GM12878 (cell line): ENCODE measurements at regions of chr4 and their contacts with region 1.

Region 1: DNA sequence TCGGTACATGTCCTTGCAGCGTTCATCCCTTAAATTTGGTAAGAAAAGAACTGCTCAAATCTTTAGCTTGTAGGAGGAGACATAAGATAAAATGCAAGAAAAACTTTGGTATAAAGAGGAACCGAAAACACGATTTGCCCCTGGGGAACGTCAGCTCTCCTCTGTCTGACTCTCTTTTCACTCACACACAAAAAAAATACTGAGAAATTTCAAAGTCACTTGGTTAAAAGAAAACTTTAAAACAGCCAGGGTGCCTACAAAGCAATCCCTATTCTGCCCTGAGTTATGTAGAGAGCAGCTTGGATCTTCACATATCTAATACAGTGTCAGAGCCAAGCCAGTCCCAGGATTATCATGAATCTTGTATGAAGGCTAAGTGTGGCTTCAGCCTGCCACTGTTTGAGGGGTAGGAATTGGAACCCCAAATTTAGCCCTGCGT is 248.5 kb upstream of the CXXC4 start:
- DNase-seq: peak; percentile 89
- ATAC-seq: peak; percentile 94
- H3K4me3 ChIP-seq: peak overlapping the region; percentile 30; the same call in 1 of the 2 replicates
- H3K27ac ChIP-seq: peak overlapping the region; percentile 95
- H3K4me1 ChIP-seq: peaks cover 12% of the 10 kb centered on the region
- H3K27me3 ChIP-seq: no peaks in the 10 kb centered on the region
- CTCF ChIP-seq: no peak
- EP300 ChIP-seq: peak; percentile 46 to 93; a peak in 3 of 4 replicates
- POLR2A ChIP-seq: no peak
- RAD21 ChIP-seq: no peak

Region 2: DNA sequence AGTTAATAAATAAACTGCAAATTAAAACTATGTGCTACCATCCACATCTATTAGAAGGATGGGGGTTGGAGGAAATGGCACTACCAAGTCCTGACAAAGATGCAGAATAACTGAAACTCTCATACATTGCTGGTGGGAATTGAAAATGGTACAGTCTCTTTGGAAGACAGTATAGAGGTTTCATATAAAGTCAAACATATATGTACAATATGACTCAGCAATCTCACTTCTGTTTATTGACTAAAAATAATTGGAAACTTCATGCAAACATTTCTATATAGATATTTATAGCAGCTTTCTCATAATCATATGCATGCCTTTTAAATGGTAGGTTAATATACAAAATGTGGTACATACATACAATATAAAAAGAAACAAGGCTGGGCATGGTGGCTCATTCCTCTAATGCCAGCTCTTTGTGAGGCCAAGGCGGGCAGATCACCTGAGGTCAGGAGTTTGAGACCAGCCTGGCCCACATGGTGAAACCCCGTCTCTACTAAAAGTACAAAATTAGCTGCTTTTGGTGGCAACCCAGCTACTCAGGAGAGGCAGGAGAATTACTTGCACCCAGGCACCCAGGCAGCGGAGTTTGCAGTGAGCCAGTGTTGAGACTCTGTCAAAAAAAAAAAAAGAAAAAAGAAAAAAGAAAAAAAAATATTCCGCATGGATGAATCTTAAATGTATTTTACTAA is 23.5 kb before region 1 on chr4:
- CTCF ChIA-PET with region 1: interaction called, 4 read pairs
- POLR2A ChIA-PET with region 1: interaction called, 3 read pairs
- RAD21 ChIA-PET with region 1: interaction called, 5 read pairs
- SMC1A ChIA-PET with region 1: interaction called, 25 read pairs
- in situ Hi-C with region 1: no loop called
- intact Hi-C with region 1: no loop called
- DNase-seq: peak; percentile 49
- ATAC-seq: peak; percentile 98
- H3K4me3 ChIP-seq: no peak overlapping the region
- H3K27ac ChIP-seq: peak overlapping the region; percentile 70
- H3K4me1 ChIP-seq: peaks cover 6% of the 10 kb centered on the region
- H3K27me3 ChIP-seq: no peaks in the 10 kb centered on the region
- CTCF ChIP-seq: no peak
- EP300 ChIP-seq: peak in 1 of 2 experiments; percentile 65; a peak in 1 of 4 replicates
- POLR2A ChIP-seq: no peak
- RAD21 ChIP-seq: no peak

Region 3: DNA sequence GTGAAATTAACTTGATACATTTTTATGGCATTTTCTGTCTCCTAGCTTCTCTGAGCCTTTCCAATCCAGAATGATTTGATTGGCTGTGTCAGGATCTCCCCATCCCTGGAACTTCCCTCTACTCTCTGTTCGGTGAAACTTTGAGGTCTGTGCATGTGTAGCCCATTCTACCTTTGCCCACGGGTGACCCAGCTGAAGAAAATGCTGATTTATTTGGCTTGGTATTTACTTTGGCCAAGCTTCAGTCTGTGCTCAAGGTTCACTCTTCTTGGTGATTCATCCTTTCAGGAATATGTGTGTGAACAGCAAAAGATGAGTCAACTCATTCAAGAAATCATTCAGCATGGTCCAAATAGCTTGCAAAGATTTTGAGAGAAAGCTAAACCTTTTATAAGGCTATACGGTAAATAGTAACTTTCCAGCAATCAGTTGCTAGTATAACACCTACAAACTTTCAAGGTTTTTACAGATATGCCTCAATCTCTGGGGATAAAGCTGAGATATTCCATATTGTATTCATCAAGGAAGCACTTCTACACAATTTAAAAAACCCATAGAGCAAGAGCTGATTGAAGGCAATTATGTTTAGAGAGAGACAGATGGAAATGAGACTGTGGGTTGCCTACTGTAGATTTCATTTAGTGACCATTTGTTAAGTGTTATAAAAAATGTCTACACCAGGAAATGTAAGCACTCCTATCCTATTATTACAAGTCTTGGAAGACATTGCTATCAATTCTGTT is 14.7 kb before region 1 on chr4:
- CTCF ChIA-PET with region 1: interaction called, 4 read pairs
- POLR2A ChIA-PET with region 1: interaction called, 3 read pairs
- RAD21 ChIA-PET with region 1: interaction called, 5 read pairs
- SMC1A ChIA-PET with region 1: interaction called, 25 read pairs
- in situ Hi-C with region 1: no loop called
- intact Hi-C with region 1: no loop called
- DNase-seq: no peak
- ATAC-seq: peak; percentile 21; the same call in 1 of the 3 replicates
- H3K4me3 ChIP-seq: no peak overlapping the region
- H3K27ac ChIP-seq: no peak overlapping the region
- H3K4me1 ChIP-seq: no peaks in the 10 kb centered on the region
- H3K27me3 ChIP-seq: no peaks in the 10 kb centered on the region
- CTCF ChIP-seq: no peak
- EP300 ChIP-seq: no peak
- POLR2A ChIP-seq: no peak
- RAD21 ChIP-seq: no peak

Region 4: GRCh38 chr4:104758574-104758973 is 15.3 kb after region 1 on chr4:
- CTCF ChIA-PET with region 1: interaction called, 4 read pairs
- POLR2A ChIA-PET with region 1: interaction called, 3 read pairs
- RAD21 ChIA-PET with region 1: interaction called, 22 read pairs
- SMC1A ChIA-PET with region 1: interaction called, 12 read pairs
- in situ Hi-C with region 1: no loop called
- intact Hi-C with region 1: no loop called
- DNase-seq: no peak
- ATAC-seq: peak; percentile 65
- H3K4me3 ChIP-seq: no peak overlapping the region
- H3K27ac ChIP-seq: no peak overlapping the region
- H3K4me1 ChIP-seq: no peaks in the 10 kb centered on the region
- H3K27me3 ChIP-seq: no peaks in the 10 kb centered on the region
- CTCF ChIP-seq: no peak
- EP300 ChIP-seq: no peak
- POLR2A ChIP-seq: no peak
- RAD21 ChIP-seq: no peak

Region 5: DNA sequence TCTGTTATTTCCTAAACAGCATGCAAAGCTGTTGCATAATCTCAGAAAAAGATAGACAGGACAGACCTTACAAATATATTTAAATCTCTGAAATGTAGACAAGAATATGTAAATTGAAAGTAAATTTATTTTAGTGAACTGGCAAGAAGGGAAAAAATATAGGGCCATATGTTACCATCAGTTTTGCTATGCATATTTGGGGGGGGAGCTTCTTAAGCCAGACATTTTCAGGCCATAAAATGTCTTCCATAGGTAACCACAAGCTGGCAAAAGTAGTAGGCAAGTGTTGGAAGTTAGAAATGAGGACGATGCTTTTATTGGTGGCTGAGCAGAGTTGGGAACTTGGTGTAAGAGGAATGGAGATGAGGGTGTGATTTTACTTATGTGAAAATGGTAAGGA is 23.4 kb after region 1 on chr4:
- CTCF ChIA-PET with region 1: no interaction called
- POLR2A ChIA-PET with region 1: interaction called, 4 read pairs
- RAD21 ChIA-PET with region 1: interaction called, 4 read pairs
- SMC1A ChIA-PET with region 1: interaction called, 18 read pairs
- in situ Hi-C with region 1: no loop called
- intact Hi-C with region 1: no loop called
- DNase-seq: no peak
- ATAC-seq: no peak
- H3K4me3 ChIP-seq: no peak overlapping the region
- H3K27ac ChIP-seq: no peak overlapping the region
- H3K4me1 ChIP-seq: no peaks in the 10 kb centered on the region
- H3K27me3 ChIP-seq: no peaks in the 10 kb centered on the region
- CTCF ChIP-seq: no peak
- EP300 ChIP-seq: no peak
- POLR2A ChIP-seq: no peak
- RAD21 ChIP-seq: no peak

Region 6: GRCh38 chr4:104868958-104869357 is 125.7 kb after region 1 on chr4:
- CTCF ChIA-PET with region 1: no interaction called
- POLR2A ChIA-PET with region 1: no interaction called
- RAD21 ChIA-PET with region 1: interaction called, 10 read pairs
- SMC1A ChIA-PET with region 1: interaction called, 5 read pairs
- in situ Hi-C with region 1: no loop called
- intact Hi-C with region 1: no loop called
- DNase-seq: peak; percentile 79
- ATAC-seq: peak; percentile 93
- H3K4me3 ChIP-seq: peak overlapping the region; percentile 24; the same call in 1 of the 2 replicates
- H3K27ac ChIP-seq: peak overlapping the region; percentile 67
- H3K4me1 ChIP-seq: peaks cover 36% of the 10 kb centered on the region
- H3K27me3 ChIP-seq: no peaks in the 10 kb centered on the region
- CTCF ChIP-seq: no peak
- EP300 ChIP-seq: peak; percentile 92 to 96
- POLR2A ChIP-seq: no peak
- RAD21 ChIP-seq: peak; percentile 24; the same call in 1 of the 2 replicates

Region 7: DNA sequence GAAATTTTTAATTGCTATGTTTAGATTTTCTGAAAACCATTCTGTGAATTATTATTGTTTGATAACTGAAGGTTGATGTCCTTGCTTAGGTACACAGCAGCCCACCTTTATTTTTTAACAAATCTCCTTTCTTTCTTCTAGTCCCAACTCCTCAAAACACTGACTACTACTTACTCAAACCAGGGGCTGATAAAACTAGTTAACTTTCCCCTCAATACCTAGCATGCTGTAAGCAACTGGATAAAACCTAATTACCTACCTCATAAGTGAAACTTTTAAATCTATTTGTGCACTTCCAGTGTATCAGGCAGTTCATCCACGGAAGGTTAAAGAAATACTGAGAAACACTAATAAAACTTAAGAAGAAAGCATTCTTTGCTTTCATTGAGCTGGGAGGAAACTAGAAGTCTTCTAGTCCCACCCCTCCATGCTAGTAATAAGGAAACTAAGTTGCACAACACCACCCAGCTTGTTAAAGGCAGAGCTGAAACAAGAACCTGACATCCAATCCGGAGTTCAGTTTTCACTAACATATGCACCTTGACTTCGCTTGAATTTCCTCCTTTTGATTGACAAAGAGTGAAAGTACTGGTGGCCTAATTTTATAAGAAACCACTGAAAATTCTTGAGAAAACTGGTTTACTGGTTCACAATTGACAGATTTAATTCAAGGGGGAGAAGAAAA is 223.3 kb after region 1 on chr4:
- CTCF ChIA-PET with region 1: no interaction called
- POLR2A ChIA-PET with region 1: no interaction called
- RAD21 ChIA-PET with region 1: no interaction called
- SMC1A ChIA-PET with region 1: interaction called, 4 read pairs
- in situ Hi-C with region 1: no loop called
- intact Hi-C with region 1: loop called (anchors 10 kb)
- DNase-seq: peak; percentile 96
- ATAC-seq: peak; percentile 95
- H3K4me3 ChIP-seq: peak overlapping the region; percentile 51; the same call in 1 of the 2 replicates
- H3K27ac ChIP-seq: peak overlapping the region; percentile 91
- H3K4me1 ChIP-seq: peaks cover 35% of the 10 kb centered on the region
- H3K27me3 ChIP-seq: no peaks in the 10 kb centered on the region
- CTCF ChIP-seq: no peak
- EP300 ChIP-seq: peak in 1 of 2 experiments; percentile 40; a peak in 1 of 4 replicates
- POLR2A ChIP-seq: no peak
- RAD21 ChIP-seq: peak; percentile 23; the same call in 1 of the 2 replicates